ENCODE measurements at regions of chr5 and their contacts with region 1.

Region 1: GRCh38 chr5:149452007-149452664 is 73.0 kb upstream of the IL17B start:
- DNase-seq: peak in 1 of 2 donors; percentile 89
- H3K4me3 ChIP-seq: no peak overlapping the region
- H3K27ac ChIP-seq: peak overlapping the region; percentile 91
- H3K4me1 ChIP-seq: peaks cover 66% of the 10 kb centered on the region
- H3K27me3 ChIP-seq: no peaks in the 10 kb centered on the region
- CTCF ChIP-seq: no peak
- POLR2A ChIP-seq: no peak

Region 2: GRCh38 chr5:149489605-149490037 is 37.5 kb after region 1 on chr5:
- intact Hi-C with region 1: loop called (anchors 5 kb)
- DNase-seq: no peak
- H3K4me3 ChIP-seq: no peak overlapping the region
- H3K27ac ChIP-seq: peak overlapping the region; percentile 29
- H3K4me1 ChIP-seq: peaks cover 54% of the 10 kb centered on the region
- H3K27me3 ChIP-seq: no peaks in the 10 kb centered on the region
- CTCF ChIP-seq: no peak
- POLR2A ChIP-seq: no peak

Region 3: GRCh38 chr5:149719678-149720077 is 267.5 kb after region 1 on chr5:
- intact Hi-C with region 1: no loop called
- DNase-seq: no peak
- H3K4me3 ChIP-seq: no peak overlapping the region
- H3K27ac ChIP-seq: no peak overlapping the region
- H3K4me1 ChIP-seq: no peaks in the 10 kb centered on the region
- H3K27me3 ChIP-seq: no peaks in the 10 kb centered on the region
- CTCF ChIP-seq: no peak
- POLR2A ChIP-seq: no peak

Region 4: GRCh38 chr5:150209020-150209635 is 757.0 kb after region 1 on chr5:
- intact Hi-C with region 1: no loop called
- DNase-seq: no peak
- H3K4me3 ChIP-seq: no peak overlapping the region
- H3K27ac ChIP-seq: peak overlapping the region; percentile 20
- H3K4me1 ChIP-seq: peaks cover 26% of the 10 kb centered on the region
- H3K27me3 ChIP-seq: no peaks in the 10 kb centered on the region
- CTCF ChIP-seq: no peak
- POLR2A ChIP-seq: no peak

Measured in vagina (tissue), 2 donors.